ENCODE measurements at regions of chr1 and their contacts with region 1.

Region 1: DNA sequence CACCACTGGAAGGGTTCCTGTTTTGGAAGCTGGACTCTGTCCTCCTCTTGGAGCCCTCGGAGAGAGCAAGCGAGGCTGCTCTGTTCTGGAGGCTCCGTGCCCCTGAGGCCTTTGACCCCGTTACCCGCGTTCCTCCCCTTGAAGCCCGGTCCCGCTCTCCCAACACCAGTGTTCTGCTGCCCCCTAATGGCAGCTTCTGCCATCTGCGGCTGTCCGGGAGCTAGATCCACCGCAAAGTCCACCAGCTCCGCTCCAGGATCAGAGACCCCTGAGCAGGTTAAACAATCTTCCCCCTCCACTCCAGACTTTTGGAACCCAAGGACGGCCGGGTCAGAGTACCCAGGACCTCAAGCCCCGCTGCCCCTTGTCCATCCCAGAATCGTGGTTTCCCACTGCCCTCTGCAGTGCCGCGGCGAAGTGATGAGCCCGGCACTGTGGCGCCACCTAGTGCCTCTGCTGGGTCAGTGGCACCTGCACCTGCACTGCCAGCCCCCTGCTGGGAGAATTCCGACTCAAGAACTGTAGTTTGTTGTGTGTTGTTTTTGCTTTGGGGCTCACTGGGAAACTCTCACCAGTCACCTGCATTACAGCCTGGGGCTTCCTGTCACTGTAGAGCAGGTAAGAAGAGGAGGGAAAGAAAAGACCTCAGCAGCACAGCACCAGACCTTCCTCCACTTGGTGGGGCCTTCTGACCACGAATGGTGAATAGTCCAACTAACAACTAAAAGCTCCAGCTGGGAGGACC is 63.5 kb upstream of the NFASC start:
- DNase-seq: peak; percentile 90
- H3K4me3 Mint-ChIP-seq: peak overlapping the region; percentile 78
- H3K27ac Mint-ChIP-seq: peak overlapping the region; percentile 38
- H3K4me1 Mint-ChIP-seq: no peaks in the 10 kb centered on the region
- H3K27me3 Mint-ChIP-seq: no peaks in the 10 kb centered on the region

Region 2: GRCh38 chr1:204494281-204495077 is 312.6 kb before region 1 on chr1 and contains the start of gene PIK3C2B:
- CTCF ChIA-PET with region 1: interaction called, 14 read pairs
- POLR2A ChIA-PET with region 1: no interaction called
- intact Hi-C with region 1: no loop called
- DNase-seq: peak; percentile 86
- H3K4me3 Mint-ChIP-seq: peak within 1 kb of the TSS; percentile 84
- H3K27ac Mint-ChIP-seq: peak within 1 kb of the TSS; percentile 92
- H3K4me1 Mint-ChIP-seq: peaks cover 50% of the 10 kb centered on the region
- H3K27me3 Mint-ChIP-seq: no peaks in the 10 kb centered on the region
- total RNA-seq, gene PIK3C2B: 43.4 to 46.4 TPM

Region 3: GRCh38 chr1:204560590-204561150 is 246.4 kb before region 1 on chr1:
- CTCF ChIA-PET with region 1: interaction called, 149 read pairs
- POLR2A ChIA-PET with region 1: interaction called, 4 read pairs
- intact Hi-C with region 1: no loop called
- DNase-seq: no peak
- H3K4me3 Mint-ChIP-seq: no peak overlapping the region
- H3K27ac Mint-ChIP-seq: no peak overlapping the region
- H3K4me1 Mint-ChIP-seq: peaks cover 56% of the 10 kb centered on the region
- H3K27me3 Mint-ChIP-seq: no peaks in the 10 kb centered on the region

Region 4: DNA sequence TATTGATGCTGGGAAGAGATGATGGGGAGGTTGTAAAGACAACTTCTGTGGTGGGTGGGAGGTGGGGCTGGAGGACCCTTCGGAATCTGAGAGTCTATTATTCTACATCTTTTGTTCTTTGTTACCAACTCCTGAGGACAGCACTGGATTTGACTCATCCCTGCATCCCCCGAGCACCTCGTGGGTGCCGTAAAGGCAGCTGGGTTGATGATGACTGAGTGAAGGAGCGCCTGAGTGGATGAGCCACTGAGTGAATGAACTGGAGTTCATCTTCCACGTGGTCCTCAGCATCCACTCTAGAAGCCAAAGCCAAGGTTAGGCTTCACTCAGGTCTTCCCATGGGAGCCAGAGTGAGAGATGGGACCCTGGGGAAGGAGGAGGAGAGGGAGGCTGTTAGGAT is 199.2 kb before region 1 on chr1:
- CTCF ChIA-PET with region 1: interaction called, 13 read pairs
- POLR2A ChIA-PET with region 1: no interaction called
- intact Hi-C with region 1: no loop called
- DNase-seq: no peak
- H3K4me3 Mint-ChIP-seq: no peak overlapping the region
- H3K27ac Mint-ChIP-seq: no peak overlapping the region
- H3K4me1 Mint-ChIP-seq: no peaks in the 10 kb centered on the region
- H3K27me3 Mint-ChIP-seq: peaks cover 3% of the 10 kb centered on the region

Region 5: GRCh38 chr1:204763706-204764427 is 43.2 kb before region 1 on chr1:
- CTCF ChIA-PET with region 1: interaction called, 46 read pairs
- POLR2A ChIA-PET with region 1: no interaction called
- intact Hi-C with region 1: loop called (anchors 5 kb)
- DNase-seq: peak; percentile 88
- H3K4me3 Mint-ChIP-seq: no peak overlapping the region
- H3K27ac Mint-ChIP-seq: no peak overlapping the region
- H3K4me1 Mint-ChIP-seq: peaks cover 6% of the 10 kb centered on the region
- H3K27me3 Mint-ChIP-seq: peaks cover 9% of the 10 kb centered on the region

Region 6: GRCh38 chr1:204828338-204828850 is 21.3 kb after region 1 on chr1:
- CTCF ChIA-PET with region 1: interaction called, 110 read pairs
- POLR2A ChIA-PET with region 1: no interaction called
- intact Hi-C with region 1: no loop called
- DNase-seq: peak; percentile 69
- H3K4me3 Mint-ChIP-seq: no peak overlapping the region
- H3K27ac Mint-ChIP-seq: no peak overlapping the region
- H3K4me1 Mint-ChIP-seq: peaks cover 4% of the 10 kb centered on the region
- H3K27me3 Mint-ChIP-seq: peaks cover 52% of the 10 kb centered on the region

Measured in activated CD4-positive, alpha-beta memory T cell treated with anti-CD3 and anti-CD28 coated beads for 36 hours (primary cell).